Dorsolateral prefrontal cortex (tissue), 120 donors: ENCODE measurements at regions of chr5 and their contacts with region 1.

Region 1: GRCh38 chr5:55711968-55712859 is at the start of gene SLC38A9:
- DNase-seq: peak; percentile 94 to 98 (median 96)
- H3K4me3 ChIP-seq: peak within 1 kb of the TSS; percentile 49 to 100 (median 92)
- H3K27ac ChIP-seq: peak within 1 kb of the TSS in 52 of 59 donors; percentile 16 to 85 (median 67)
- H3K27me3 ChIP-seq: no peaks in the 10 kb centered on the region
- CTCF ChIP-seq: peak in 29 of 56 donors; percentile 6 to 51 (median 27)
- total RNA-seq, gene SLC38A9: 20.8 to 47.3 (median 31.5) TPM

Region 2: GRCh38 chr5:55771175-55771655 is 59.0 kb after region 1 on chr5:
- intact Hi-C with region 1: loop called in 1 of 2 experiments (anchors 5 kb)
- DNase-seq: no peak
- H3K4me3 ChIP-seq: no peak overlapping the region
- H3K27ac ChIP-seq: peak overlapping the region in 1 of 59 donors; percentile 92
- H3K27me3 ChIP-seq: no peaks in the 10 kb centered on the region
- CTCF ChIP-seq: no peak

Region 3: GRCh38 chr5:55913466-55914413 is 201.5 kb after region 1 on chr5:
- intact Hi-C with region 1: loop called in 1 of 2 experiments (anchors 5 kb)
- DNase-seq: no peak
- H3K4me3 ChIP-seq: no peak overlapping the region
- H3K27ac ChIP-seq: no peak overlapping the region
- H3K27me3 ChIP-seq: no peaks in the 10 kb centered on the region
- CTCF ChIP-seq: no peak